ENCODE measurements at regions of chr17 and their contacts with region 1.

Region 1: DNA sequence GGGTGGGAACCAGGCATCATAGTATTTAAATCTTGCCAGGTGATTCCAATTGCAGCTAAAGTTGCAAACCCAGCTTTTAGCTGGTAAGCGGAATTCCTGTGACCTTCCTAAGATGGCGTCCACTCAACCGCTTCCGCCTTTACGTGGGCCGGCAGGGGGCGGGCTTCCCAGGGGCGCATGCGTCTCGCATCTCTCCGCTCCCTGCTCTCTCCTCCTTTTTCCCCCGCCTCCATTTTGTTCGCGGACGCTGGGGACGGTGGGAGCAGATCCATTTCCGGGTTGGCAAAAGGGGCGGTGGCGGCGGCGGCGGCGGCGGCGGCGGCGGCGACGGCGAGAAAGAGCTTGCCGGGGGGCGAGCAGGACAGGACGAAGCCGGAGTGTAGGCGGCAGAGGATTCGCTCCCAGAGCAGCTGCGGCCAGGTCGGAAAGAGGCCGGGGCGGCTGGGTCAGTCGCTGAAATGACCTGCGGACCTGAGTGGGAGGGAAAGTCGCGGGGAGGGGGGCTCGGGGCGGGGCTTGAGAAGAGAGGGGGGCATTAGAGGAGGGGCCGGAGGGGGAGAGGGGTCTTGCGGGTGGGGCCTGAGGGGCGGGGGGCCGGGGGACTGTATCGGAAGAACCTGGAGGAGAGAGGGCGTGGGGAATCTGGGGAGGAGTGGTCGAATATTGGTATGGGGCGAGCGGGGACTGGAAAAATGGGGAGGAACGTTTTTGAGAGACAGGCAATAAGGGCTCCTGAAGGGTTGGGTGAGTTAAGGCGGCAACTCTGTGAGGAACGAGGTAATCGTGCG is at the start of gene WIPF2:
- DNase-seq: peak; percentile 96 to 98
- ATAC-seq: peak; percentile 95 to 98
- H3K4me3 ChIP-seq: peak within 1 kb of the TSS; percentile 70
- H3K27ac ChIP-seq: peak within 1 kb of the TSS; percentile 87 to 92
- H3K4me1 ChIP-seq: peaks cover 17% of the 10 kb centered on the region; the same call in 2 of the 3 replicates
- CTCF ChIP-seq: 0 out of 3 replicates have a peak, but pooled peaks have one; percentile 29
- EP300 ChIP-seq: no peak
- POLR2A ChIP-seq: no peak; the same call in 1 of the 2 replicates
- RAD21 ChIP-seq: no peak
- polyA plus RNA-seq, gene WIPF2: 13.8 and 15.3 TPM in 2 replicates

Region 2: GRCh38 chr17:40098846-40099618 is 120.2 kb before region 1 on chr17:
- CTCF ChIA-PET with region 1: no interaction called
- POLR2A ChIA-PET with region 1: interaction called, 11 read pairs
- DNase-seq: peak; percentile 99
- ATAC-seq: peak; percentile 58 to 66
- H3K4me3 ChIP-seq: peak overlapping the region; percentile 54
- H3K27ac ChIP-seq: peak overlapping the region; percentile 89
- H3K4me1 ChIP-seq: peaks cover 53% of the 10 kb centered on the region
- CTCF ChIP-seq: no peak
- EP300 ChIP-seq: peak in 1 of 2 experiments; percentile 53; a peak in 1 of 5 replicates
- POLR2A ChIP-seq: no peak
- RAD21 ChIP-seq: no peak; a peak in 1 of 5 replicates

Region 3: DNA sequence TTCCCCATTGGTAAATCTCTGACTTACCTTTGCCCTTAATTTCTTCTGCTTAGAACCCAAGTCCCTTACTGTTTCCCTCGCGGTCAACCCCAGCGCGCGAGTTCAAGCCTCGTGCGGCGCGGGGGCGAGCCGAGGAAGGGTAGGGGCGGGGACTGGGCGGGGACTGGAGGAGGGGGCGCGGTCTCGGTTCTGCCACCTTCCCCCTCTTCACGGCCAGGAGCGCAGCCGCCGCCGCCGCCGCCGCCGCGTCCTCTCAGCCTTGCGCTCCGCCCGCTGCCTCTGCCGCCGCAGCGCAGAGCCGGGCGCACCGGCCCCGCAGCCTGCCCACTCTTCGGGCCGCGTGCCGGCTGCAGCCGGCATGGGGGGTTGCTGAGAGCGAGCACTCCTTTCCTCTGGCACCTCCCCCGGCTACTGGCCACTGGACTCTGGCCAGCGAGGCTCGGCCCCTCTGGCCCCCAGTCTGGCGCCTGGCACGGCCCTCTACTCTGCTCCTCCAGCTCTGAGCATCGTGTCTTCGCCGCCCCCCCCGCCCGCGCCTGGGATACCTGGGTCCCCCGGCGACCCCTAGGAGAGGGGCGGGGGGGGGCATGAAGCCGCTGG is 41.9 kb before region 1 on chr17 and contains the start of gene RAPGEFL1:
- CTCF ChIA-PET with region 1: interaction called, 10 read pairs
- POLR2A ChIA-PET with region 1: interaction called, 3 read pairs
- DNase-seq: no peak
- ATAC-seq: peak; percentile 26 to 53; a peak in 3 of 6 replicates
- H3K4me3 ChIP-seq: peak within 1 kb of the TSS; percentile 27; the same call in 2 of the 3 replicates
- H3K27ac ChIP-seq: peak within 1 kb of the TSS in 1 of 2 experiments; percentile 47; a peak in 2 of 6 replicates
- H3K4me1 ChIP-seq: peaks cover 26% of the 10 kb centered on the region
- CTCF ChIP-seq: no peak
- EP300 ChIP-seq: no peak
- POLR2A ChIP-seq: no peak
- RAD21 ChIP-seq: no peak
- polyA plus RNA-seq, gene RAPGEFL1: 3.7 and 4.1 TPM in 2 replicates

Region 4: DNA sequence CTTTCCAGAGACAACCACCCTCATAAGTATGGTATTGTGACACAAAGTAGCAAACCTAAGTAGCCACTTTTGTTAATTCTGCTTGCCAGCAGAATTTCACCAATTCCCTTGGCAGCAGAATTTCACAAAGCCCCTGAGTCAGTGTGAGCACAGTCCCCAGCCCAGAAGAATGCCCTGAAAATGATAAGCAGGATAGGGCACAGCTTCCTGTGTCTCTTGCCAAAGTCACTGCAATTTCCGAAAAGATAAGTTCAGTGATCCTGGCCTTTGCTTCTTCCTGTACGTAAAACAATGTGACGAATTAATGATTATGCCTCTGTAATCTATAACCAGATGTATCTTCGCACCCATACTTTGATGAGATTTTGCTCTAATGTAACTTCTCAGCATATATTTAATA is 16.1 kb before region 1 on chr17:
- CTCF ChIA-PET with region 1: interaction called, 91 read pairs
- POLR2A ChIA-PET with region 1: interaction called, 6 read pairs
- DNase-seq: no peak
- ATAC-seq: no peak
- H3K4me3 ChIP-seq: no peak overlapping the region
- H3K27ac ChIP-seq: no peak overlapping the region
- H3K4me1 ChIP-seq: no peaks in the 10 kb centered on the region
- CTCF ChIP-seq: no peak
- EP300 ChIP-seq: no peak
- POLR2A ChIP-seq: no peak
- RAD21 ChIP-seq: no peak

Region 5: GRCh38 chr17:40242774-40243173 is 23.5 kb after region 1 on chr17:
- CTCF ChIA-PET with region 1: interaction called, 20 read pairs
- POLR2A ChIA-PET with region 1: interaction called, 3 read pairs
- DNase-seq: no peak
- ATAC-seq: no peak
- H3K4me3 ChIP-seq: no peak overlapping the region
- H3K27ac ChIP-seq: no peak overlapping the region
- H3K4me1 ChIP-seq: no peaks in the 10 kb centered on the region
- CTCF ChIP-seq: no peak
- EP300 ChIP-seq: no peak
- POLR2A ChIP-seq: no peak
- RAD21 ChIP-seq: no peak

Region 6: DNA sequence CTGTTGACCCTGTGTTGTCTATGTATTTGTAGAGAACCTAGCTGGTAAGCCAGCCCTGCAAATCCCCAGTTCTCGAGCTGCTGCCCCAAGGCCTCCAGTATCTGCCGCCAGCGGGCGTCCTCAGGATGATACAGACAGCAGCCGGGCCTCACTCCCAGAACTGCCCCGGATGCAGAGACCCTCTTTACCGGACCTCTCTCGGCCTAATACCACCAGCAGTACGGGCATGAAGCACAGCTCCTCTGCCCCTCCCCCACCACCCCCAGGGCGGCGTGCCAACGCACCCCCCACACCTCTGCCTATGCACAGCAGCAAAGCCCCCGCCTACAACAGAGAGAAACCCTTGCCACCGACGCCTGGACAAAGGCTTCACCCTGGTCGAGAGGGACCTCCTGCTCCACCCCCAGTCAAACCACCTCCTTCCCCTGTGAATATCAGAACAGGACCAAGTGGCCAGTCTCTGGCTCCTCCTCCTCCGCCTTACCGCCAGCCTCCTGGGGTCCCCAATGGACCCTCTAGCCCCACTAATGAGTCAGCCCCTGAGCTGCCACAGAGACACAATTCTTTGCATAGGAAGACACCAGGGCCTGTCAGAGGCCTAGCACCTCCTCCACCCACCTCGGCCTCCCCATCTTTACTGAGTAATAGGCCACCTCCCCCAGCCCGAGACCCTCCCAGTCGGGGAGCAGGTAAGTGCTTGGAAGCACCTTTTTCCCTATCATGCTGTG is 45.4 kb after region 1 on chr17:
- CTCF ChIA-PET with region 1: interaction called, 12 read pairs
- POLR2A ChIA-PET with region 1: interaction called, 6 read pairs
- DNase-seq: no peak
- ATAC-seq: no peak
- H3K4me3 ChIP-seq: no peak overlapping the region
- H3K27ac ChIP-seq: no peak overlapping the region
- H3K4me1 ChIP-seq: no peaks in the 10 kb centered on the region
- CTCF ChIP-seq: no peak
- EP300 ChIP-seq: no peak
- POLR2A ChIP-seq: no peak
- RAD21 ChIP-seq: no peak